ENCODE measurements at regions of chr12 and their contacts with region 1.

Region 1: GRCh38 chr12:39587225-39587624 is 32.4 kb downstream of the ABCD2 start:
- DNase-seq: peak in 9 of 14 experiments; percentile 3 to 68 (median 16)
- ATAC-seq: peak; percentile 73
- H3K4me3 ChIP-seq: no peak overlapping the region
- H3K4me3 Mint-ChIP-seq: no peak overlapping the region
- H3K27ac ChIP-seq: no peak overlapping the region
- H3K27ac Mint-ChIP-seq: no peak overlapping the region
- H3K4me1 ChIP-seq: no peaks in the 10 kb centered on the region
- H3K4me1 Mint-ChIP-seq: no peaks in the 10 kb centered on the region
- H3K27me3 ChIP-seq: no peaks in the 10 kb centered on the region
- H3K27me3 Mint-ChIP-seq: no peaks in the 10 kb centered on the region
- CTCF ChIP-seq: peak; percentile 76

Region 2: GRCh38 chr12:39103552-39104165 is 483.6 kb before region 1 on chr12:
- CTCF ChIA-PET with region 1: no interaction called
- POLR2A ChIA-PET with region 1: no interaction called
- intact Hi-C with region 1: no loop called
- DNase-seq: peak in 4 of 14 experiments; percentile 3 to 59 (median 50)
- ATAC-seq: peak; percentile 51
- H3K4me3 ChIP-seq: no peak overlapping the region
- H3K4me3 Mint-ChIP-seq: no peak overlapping the region
- H3K27ac ChIP-seq: no peak overlapping the region
- H3K27ac Mint-ChIP-seq: no peak overlapping the region
- H3K4me1 ChIP-seq: no peaks in the 10 kb centered on the region
- H3K4me1 Mint-ChIP-seq: no peaks in the 10 kb centered on the region
- H3K27me3 ChIP-seq: no peaks in the 10 kb centered on the region
- H3K27me3 Mint-ChIP-seq: no peaks in the 10 kb centered on the region
- CTCF ChIP-seq: peak; percentile 53

Region 3: GRCh38 chr12:39526974-39527373 is 60.3 kb before region 1 on chr12:
- CTCF ChIA-PET with region 1: no interaction called
- POLR2A ChIA-PET with region 1: no interaction called
- intact Hi-C with region 1: no loop called
- DNase-seq: no peak
- ATAC-seq: no peak
- H3K4me3 ChIP-seq: no peak overlapping the region
- H3K4me3 Mint-ChIP-seq: no peak overlapping the region
- H3K27ac ChIP-seq: no peak overlapping the region
- H3K27ac Mint-ChIP-seq: no peak overlapping the region
- H3K4me1 ChIP-seq: no peaks in the 10 kb centered on the region
- H3K4me1 Mint-ChIP-seq: no peaks in the 10 kb centered on the region
- H3K27me3 ChIP-seq: no peaks in the 10 kb centered on the region
- H3K27me3 Mint-ChIP-seq: no peaks in the 10 kb centered on the region
- CTCF ChIP-seq: no peak

Region 4: DNA sequence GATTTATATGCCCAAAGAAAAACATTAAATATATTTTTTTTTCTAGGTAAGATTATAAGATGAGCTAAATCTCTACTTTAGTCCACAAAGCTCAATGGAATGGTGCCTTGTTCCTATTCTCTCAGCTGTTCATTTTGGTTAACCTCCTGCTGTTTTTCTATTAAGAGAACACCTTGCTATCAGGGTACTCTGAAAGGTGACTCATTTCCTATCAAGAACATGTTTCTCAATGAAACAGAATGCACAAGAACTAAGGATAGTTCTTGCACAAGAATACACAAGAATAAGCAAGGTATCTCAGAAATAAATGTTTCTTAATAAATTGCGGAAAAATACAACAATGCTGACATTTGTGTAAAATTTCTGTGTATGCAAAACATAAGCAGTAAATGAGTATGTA is 18.3 kb after region 1 on chr12:
- CTCF ChIA-PET with region 1: interaction called, 3 read pairs
- POLR2A ChIA-PET with region 1: no interaction called
- intact Hi-C with region 1: loop called in 1 of 2 experiments (anchors 2 kb)
- DNase-seq: no peak
- ATAC-seq: no peak
- H3K4me3 ChIP-seq: no peak overlapping the region
- H3K4me3 Mint-ChIP-seq: no peak overlapping the region
- H3K27ac ChIP-seq: no peak overlapping the region
- H3K27ac Mint-ChIP-seq: no peak overlapping the region
- H3K4me1 ChIP-seq: no peaks in the 10 kb centered on the region
- H3K4me1 Mint-ChIP-seq: peaks cover 6% of the 10 kb centered on the region
- H3K27me3 ChIP-seq: no peaks in the 10 kb centered on the region
- H3K27me3 Mint-ChIP-seq: no peaks in the 10 kb centered on the region
- CTCF ChIP-seq: no peak

Region 5: DNA sequence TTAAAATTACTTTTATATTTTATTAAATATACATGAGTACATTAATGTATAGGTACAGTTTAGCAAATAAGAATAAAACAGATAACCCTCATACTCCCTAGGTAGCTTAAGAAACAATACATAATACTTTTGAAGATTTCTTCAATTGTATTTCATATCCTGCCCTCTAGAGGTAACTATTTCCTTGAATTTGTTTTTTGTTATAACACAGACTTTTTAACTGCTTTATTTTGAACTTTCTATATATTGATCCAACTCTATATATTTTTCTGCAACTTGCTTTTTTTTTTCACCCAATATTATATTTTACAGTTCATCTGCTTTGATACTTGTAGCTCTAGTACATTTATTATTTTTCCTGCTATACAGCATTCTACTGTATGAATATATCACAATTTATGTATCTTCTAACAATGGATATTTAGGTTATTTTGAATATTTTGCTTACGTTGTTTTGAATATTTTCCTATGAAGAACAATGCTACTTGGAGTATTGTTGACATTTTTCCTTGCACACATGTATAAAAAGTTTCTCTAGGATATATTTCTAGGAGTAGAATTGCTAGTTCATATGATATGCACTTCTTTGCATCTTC is 105.1 kb after region 1 on chr12:
- CTCF ChIA-PET with region 1: interaction called, 5 read pairs
- POLR2A ChIA-PET with region 1: interaction called, 4 read pairs
- intact Hi-C with region 1: loop called (anchors 1 kb)
- DNase-seq: peak in 3 of 14 experiments; percentile 32 to 62 (median 33)
- ATAC-seq: peak; percentile 37
- H3K4me3 ChIP-seq: no peak overlapping the region
- H3K4me3 Mint-ChIP-seq: no peak overlapping the region
- H3K27ac ChIP-seq: no peak overlapping the region
- H3K27ac Mint-ChIP-seq: no peak overlapping the region
- H3K4me1 ChIP-seq: no peaks in the 10 kb centered on the region
- H3K4me1 Mint-ChIP-seq: peaks cover 4% of the 10 kb centered on the region
- H3K27me3 ChIP-seq: no peaks in the 10 kb centered on the region
- H3K27me3 Mint-ChIP-seq: peaks cover 11% of the 10 kb centered on the region
- CTCF ChIP-seq: peak; percentile 76

Region 6: GRCh38 chr12:39990122-39991101 is 403.2 kb after region 1 on chr12:
- CTCF ChIA-PET with region 1: interaction called, 3 read pairs
- POLR2A ChIA-PET with region 1: no interaction called
- intact Hi-C with region 1: loop called (anchors 1 to 2 kb)
- DNase-seq: peak; percentile 28 to 67 (median 46)
- ATAC-seq: peak; percentile 64
- H3K4me3 ChIP-seq: no peak overlapping the region
- H3K4me3 Mint-ChIP-seq: no peak overlapping the region
- H3K27ac ChIP-seq: no peak overlapping the region
- H3K27ac Mint-ChIP-seq: no peak overlapping the region
- H3K4me1 ChIP-seq: no peaks in the 10 kb centered on the region
- H3K4me1 Mint-ChIP-seq: no peaks in the 10 kb centered on the region
- H3K27me3 ChIP-seq: no peaks in the 10 kb centered on the region
- H3K27me3 Mint-ChIP-seq: no peaks in the 10 kb centered on the region
- CTCF ChIP-seq: peak; percentile 87